Activated CD4-positive, alpha-beta T cell treated with anti-CD3 and anti-CD28 coated beads for 36 hours (primary cell): ENCODE measurements at regions of chr3 and their contacts with region 1.

Region 1: GRCh38 chr3:8780279-8780678 is 10.9 kb upstream of the OXTR start:
- DNase-seq: no peak
- ATAC-seq: no peak
- H3K4me3 Mint-ChIP-seq: no peak overlapping the region
- H3K27ac Mint-ChIP-seq: no peak overlapping the region
- H3K4me1 Mint-ChIP-seq: no peaks in the 10 kb centered on the region
- H3K27me3 Mint-ChIP-seq: peaks cover 11% of the 10 kb centered on the region

Region 2: GRCh38 chr3:8769088-8769822 is 11.0 kb before region 1 on chr3 and contains the start of gene OXTR:
- CTCF ChIA-PET with region 1: interaction called, 12 read pairs
- POLR2A ChIA-PET with region 1: no interaction called
- intact Hi-C with region 1: no loop called
- DNase-seq: peak; percentile 79
- ATAC-seq: peak; percentile 93
- H3K4me3 Mint-ChIP-seq: peak within 1 kb of the TSS; percentile 30
- H3K27ac Mint-ChIP-seq: no peak within 1 kb of the TSS
- H3K4me1 Mint-ChIP-seq: peaks cover 12% of the 10 kb centered on the region
- H3K27me3 Mint-ChIP-seq: peaks cover 39% of the 10 kb centered on the region
- total RNA-seq, gene OXTR: 0.70 to 0.91 TPM

Region 3: GRCh38 chr3:9047452-9048346 is 267.4 kb after region 1 on chr3:
- CTCF ChIA-PET with region 1: no interaction called
- POLR2A ChIA-PET with region 1: no interaction called
- intact Hi-C with region 1: no loop called
- DNase-seq: no peak
- ATAC-seq: no peak
- H3K4me3 Mint-ChIP-seq: no peak overlapping the region
- H3K27ac Mint-ChIP-seq: no peak overlapping the region
- H3K4me1 Mint-ChIP-seq: no peaks in the 10 kb centered on the region
- H3K27me3 Mint-ChIP-seq: no peaks in the 10 kb centered on the region